Naive thymus-derived CD4-positive, alpha-beta T cell (primary cell): ENCODE measurements at regions of chr17 and their contacts with region 1.

Region 1: DNA sequence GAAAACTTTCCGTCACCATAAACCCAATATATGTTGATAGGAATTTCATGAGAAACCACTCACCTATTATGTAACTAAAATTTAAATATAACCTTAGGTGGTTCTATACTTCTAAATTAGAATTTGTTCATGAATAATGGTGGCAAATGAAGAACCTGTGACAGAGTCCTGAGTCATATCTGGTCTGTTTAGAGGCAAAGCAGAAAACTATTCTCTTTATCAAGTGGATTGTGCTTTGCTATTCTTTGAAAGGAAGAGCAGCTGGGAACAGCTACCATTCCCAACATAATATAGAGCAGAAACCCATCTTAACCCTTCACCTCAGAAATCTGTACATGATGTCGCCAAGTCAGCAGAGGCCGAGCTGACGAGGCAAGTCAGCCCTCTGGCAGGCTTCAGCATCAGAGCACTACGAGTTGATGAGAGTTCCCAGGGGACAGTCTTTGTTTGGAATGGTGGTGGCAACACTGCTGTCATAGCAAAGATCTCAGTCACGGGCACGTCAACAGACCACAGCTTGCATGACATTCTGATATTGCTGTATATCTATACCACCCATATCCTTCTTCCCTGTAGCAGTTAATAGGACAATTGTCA is 631.9 kb upstream of the CA10 start:
- DNase-seq: no peak
- ATAC-seq: no peak
- H3K4me3 ChIP-seq: no peak overlapping the region
- H3K4me3 Mint-ChIP-seq: no peak overlapping the region
- H3K27ac ChIP-seq: no peak overlapping the region
- H3K27ac Mint-ChIP-seq: no peak overlapping the region
- H3K4me1 ChIP-seq: no peaks in the 10 kb centered on the region
- H3K4me1 Mint-ChIP-seq: no peaks in the 10 kb centered on the region
- H3K27me3 ChIP-seq: no peaks in the 10 kb centered on the region
- H3K27me3 Mint-ChIP-seq: peaks cover 0 to 4% (median 0%) of the 10 kb centered on the region in 5 donors

Region 2: GRCh38 chr17:52751051-52751450 is 39.4 kb before region 1 on chr17:
- CTCF ChIA-PET with region 1: no interaction called
- POLR2A ChIA-PET with region 1: no interaction called
- intact Hi-C with region 1: loop called in 1 of 2 experiments (anchors 5 kb)
- DNase-seq: no peak
- ATAC-seq: no peak
- H3K4me3 ChIP-seq: no peak overlapping the region
- H3K4me3 Mint-ChIP-seq: no peak overlapping the region
- H3K27ac ChIP-seq: no peak overlapping the region
- H3K27ac Mint-ChIP-seq: no peak overlapping the region
- H3K4me1 ChIP-seq: no peaks in the 10 kb centered on the region
- H3K4me1 Mint-ChIP-seq: no peaks in the 10 kb centered on the region
- H3K27me3 ChIP-seq: no peaks in the 10 kb centered on the region
- H3K27me3 Mint-ChIP-seq: no peaks in the 10 kb centered on the region